ENCODE measurements at regions of chr6 and their contacts with region 1.

Region 1: DNA sequence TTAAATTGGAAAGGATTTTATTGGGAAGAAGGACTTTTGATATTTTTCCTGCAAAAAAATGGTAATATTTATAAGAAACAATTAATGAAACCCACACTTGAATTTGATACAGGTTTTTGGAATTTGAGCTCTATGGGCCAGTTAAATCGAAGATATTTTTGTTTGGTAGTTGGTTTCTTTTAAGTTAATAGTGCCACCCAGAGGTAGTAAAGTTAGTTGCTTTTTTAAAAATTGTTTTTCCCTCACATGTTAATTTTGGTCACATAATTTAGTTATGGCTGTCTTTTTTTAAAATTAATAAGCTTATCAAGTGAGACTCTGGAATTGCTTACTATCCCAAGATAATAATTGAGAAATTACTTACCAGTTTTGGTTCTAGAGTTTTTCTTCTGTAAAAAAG is 7.1 kb downstream of the PRIM2 start:
- DNase-seq: peak in 2 of 9 experiments; percentile 8 to 26
- ATAC-seq: no peak
- H3K4me3 ChIP-seq: no peak overlapping the region
- H3K4me3 Mint-ChIP-seq: no peak overlapping the region
- H3K27ac ChIP-seq: no peak overlapping the region
- H3K27ac Mint-ChIP-seq: no peak overlapping the region
- H3K4me1 ChIP-seq: no peaks in the 10 kb centered on the region
- H3K4me1 Mint-ChIP-seq: peaks cover 18% of the 10 kb centered on the region
- H3K27me3 ChIP-seq: no peaks in the 10 kb centered on the region
- H3K27me3 Mint-ChIP-seq: no peaks in the 10 kb centered on the region
- CTCF ChIP-seq: peak; percentile 40

Region 2: GRCh38 chr6:56445818-56446217 is 878.7 kb before region 1 on chr6:
- CTCF ChIA-PET with region 1: no interaction called
- POLR2A ChIA-PET with region 1: no interaction called
- intact Hi-C with region 1: no loop called
- DNase-seq: no peak
- ATAC-seq: no peak
- H3K4me3 ChIP-seq: no peak overlapping the region
- H3K4me3 Mint-ChIP-seq: no peak overlapping the region
- H3K27ac ChIP-seq: no peak overlapping the region
- H3K27ac Mint-ChIP-seq: no peak overlapping the region
- H3K4me1 ChIP-seq: no peaks in the 10 kb centered on the region
- H3K4me1 Mint-ChIP-seq: no peaks in the 10 kb centered on the region
- H3K27me3 ChIP-seq: no peaks in the 10 kb centered on the region
- H3K27me3 Mint-ChIP-seq: no peaks in the 10 kb centered on the region
- CTCF ChIP-seq: no peak

Region 3: GRCh38 chr6:57267586-57268293 is 56.8 kb before region 1 on chr6:
- CTCF ChIA-PET with region 1: interaction called, 5 read pairs
- POLR2A ChIA-PET with region 1: no interaction called
- intact Hi-C with region 1: loop called in 1 of 2 experiments (anchors 2 kb)
- DNase-seq: peak in 7 of 9 experiments; percentile 6 to 61 (median 40)
- ATAC-seq: peak; percentile 31
- H3K4me3 ChIP-seq: no peak overlapping the region
- H3K4me3 Mint-ChIP-seq: no peak overlapping the region
- H3K27ac ChIP-seq: no peak overlapping the region
- H3K27ac Mint-ChIP-seq: no peak overlapping the region
- H3K4me1 ChIP-seq: no peaks in the 10 kb centered on the region
- H3K4me1 Mint-ChIP-seq: no peaks in the 10 kb centered on the region
- H3K27me3 ChIP-seq: no peaks in the 10 kb centered on the region
- H3K27me3 Mint-ChIP-seq: peaks cover 5% of the 10 kb centered on the region
- CTCF ChIP-seq: peak; percentile 56

Region 4: DNA sequence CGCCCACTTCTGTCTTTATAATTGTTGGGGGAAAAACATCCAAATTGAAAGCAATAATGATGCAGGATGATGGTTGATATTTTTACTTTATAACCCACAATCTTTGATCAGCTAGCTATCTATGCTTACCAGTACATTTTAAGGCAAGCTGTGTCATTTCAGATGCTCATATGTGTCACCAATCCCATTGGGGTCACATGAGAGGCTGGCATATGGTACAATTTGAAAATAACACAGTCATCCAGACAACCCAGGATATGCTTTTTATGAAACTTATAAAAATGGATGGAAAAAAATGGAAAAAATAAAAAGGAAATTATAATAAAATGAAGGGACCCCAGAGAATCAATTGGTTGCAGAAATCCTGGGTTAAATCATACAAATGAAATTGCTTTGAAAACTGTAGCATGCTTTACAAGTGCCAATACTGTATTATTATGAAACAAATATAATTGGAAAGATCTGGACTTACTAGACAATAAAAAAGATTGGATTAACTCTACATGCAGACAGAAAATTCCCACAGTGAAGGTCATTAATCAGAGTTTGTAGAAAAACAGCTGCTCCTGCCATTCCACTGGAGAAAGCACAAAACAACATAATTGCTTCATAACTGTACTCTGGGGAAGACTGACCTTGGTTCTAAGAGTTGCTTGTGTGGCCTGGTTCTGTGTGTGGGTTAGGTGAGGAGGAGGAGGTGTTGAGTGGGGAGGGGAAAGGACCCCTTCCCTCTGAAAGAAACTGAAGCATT is 20.4 kb before region 1 on chr6:
- CTCF ChIA-PET with region 1: no interaction called
- POLR2A ChIA-PET with region 1: no interaction called
- intact Hi-C with region 1: no loop called
- DNase-seq: no peak
- ATAC-seq: no peak
- H3K4me3 ChIP-seq: no peak overlapping the region
- H3K4me3 Mint-ChIP-seq: no peak overlapping the region
- H3K27ac ChIP-seq: no peak overlapping the region
- H3K27ac Mint-ChIP-seq: no peak overlapping the region
- H3K4me1 ChIP-seq: no peaks in the 10 kb centered on the region
- H3K4me1 Mint-ChIP-seq: no peaks in the 10 kb centered on the region
- H3K27me3 ChIP-seq: no peaks in the 10 kb centered on the region
- H3K27me3 Mint-ChIP-seq: peaks cover 10% of the 10 kb centered on the region
- CTCF ChIP-seq: no peak

Measured in CD8-positive, alpha-beta T cell (primary cell).